Posterior vena cava (tissue), 2 donors: ENCODE measurements at regions of chr7 and their contacts with region 1.

Region 1: DNA sequence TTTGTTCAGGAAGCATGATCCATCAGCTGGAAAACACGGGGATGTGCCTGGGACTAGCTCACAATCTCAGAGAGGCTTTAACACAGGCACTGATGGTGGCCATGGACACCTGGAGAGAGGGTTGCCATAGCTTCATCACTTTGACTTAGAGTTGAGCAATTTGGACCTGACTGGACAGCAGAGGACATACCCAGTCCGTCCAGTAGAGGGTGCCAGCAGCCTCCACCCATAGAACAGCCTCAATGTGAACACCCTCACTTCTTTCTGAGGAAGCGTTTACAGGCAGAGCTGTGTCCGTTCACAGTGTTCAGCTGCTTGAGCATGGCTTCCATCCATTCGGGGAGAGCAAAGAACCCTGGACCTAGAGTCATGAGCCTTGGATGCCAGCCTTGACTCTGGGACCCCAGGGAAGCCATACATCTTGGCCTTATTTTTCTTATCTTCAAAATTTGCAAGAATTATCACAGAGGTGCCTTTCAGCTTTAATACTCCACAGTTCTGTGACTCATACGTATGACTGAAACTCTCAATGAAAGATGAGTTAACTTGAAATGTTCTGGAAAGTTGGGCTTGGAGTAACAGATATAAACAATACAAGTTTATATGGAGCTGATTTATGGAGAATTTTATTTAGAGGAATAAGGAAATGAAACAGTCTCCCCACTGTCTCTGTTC is 302.9 kb upstream of the PODXL start:
- DNase-seq: peak; percentile 83

Region 2: DNA sequence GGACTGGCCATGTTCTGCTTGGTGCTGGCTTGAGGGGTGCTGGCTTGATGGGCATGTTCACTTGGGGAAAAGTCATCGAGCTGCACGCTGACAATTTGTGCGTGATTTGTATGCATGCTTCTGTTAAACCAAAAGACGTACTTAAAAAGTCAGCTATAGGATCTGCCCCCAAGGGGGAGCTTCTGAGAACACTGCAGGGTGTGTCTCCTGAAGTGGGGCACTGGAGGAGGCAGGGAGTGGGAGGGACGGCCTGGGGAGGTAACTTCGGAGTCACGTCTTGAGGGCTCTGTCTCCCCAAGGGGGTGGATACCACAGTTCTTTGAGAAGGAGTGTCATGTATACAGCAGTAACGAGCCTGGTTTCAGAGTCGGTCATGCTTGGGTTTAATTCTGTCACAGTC is 310.4 kb after region 1 on chr7:
- intact Hi-C with region 1: loop called in 1 of 2 experiments (anchors 5 kb)
- DNase-seq: no peak